Heart right ventricle (tissue), 16 donors: ENCODE measurements at regions of chr5 and their contacts with region 1.

Region 1: GRCh38 chr5:154610321-154611154 is 132.5 kb upstream of the HAND1 start:
- DNase-seq: peak; percentile 56 to 66
- ATAC-seq: peak; percentile 86 to 93 (median 92)
- H3K4me3 ChIP-seq: peak overlapping the region in 9 of 10 donors; percentile 10 to 48 (median 36)
- H3K27ac ChIP-seq: no peak overlapping the region
- H3K4me1 ChIP-seq: peaks cover 5 to 18% (median 13%) of the 10 kb centered on the region in 9 donors
- H3K27me3 ChIP-seq: peaks cover 5 to 78% (median 62%) of the 10 kb centered on the region in 7 donors
- CTCF ChIP-seq: peak; percentile 59 to 86 (median 82)

Region 2: DNA sequence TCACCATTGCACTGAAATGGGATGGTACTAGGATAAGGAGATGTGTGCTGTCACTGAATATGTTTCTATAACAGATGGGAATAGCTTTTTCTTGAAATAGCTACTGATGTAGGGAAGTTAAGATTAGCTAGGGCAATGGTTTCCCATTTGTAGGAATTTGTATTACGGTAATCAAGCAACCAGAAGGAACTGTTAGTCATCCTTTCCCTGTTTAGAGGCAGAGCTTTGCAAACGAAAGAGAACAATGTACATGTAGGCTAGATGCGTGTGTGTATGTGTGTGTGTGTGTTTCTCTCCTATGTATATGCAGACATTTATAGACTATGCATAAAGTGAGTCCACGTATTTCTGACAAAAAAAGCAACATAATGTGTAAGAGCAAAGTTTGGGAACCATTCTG is 1292.0 kb before region 1 on chr5:
- intact Hi-C with region 1: loop called in 1 of 10 experiments (anchors 5 kb)
- DNase-seq: no peak
- ATAC-seq: no peak
- H3K4me3 ChIP-seq: no peak overlapping the region
- H3K27ac ChIP-seq: no peak overlapping the region
- H3K4me1 ChIP-seq: no peaks in the 10 kb centered on the region
- H3K27me3 ChIP-seq: peaks cover 0 to 5% (median 0%) of the 10 kb centered on the region in 7 donors
- CTCF ChIP-seq: no peak

Region 3: GRCh38 chr5:154467655-154468354 is 142.7 kb before region 1 on chr5:
- intact Hi-C with region 1: loop called (anchors 1 to 5 kb)
- DNase-seq: peak; percentile 76 to 79
- ATAC-seq: peak; percentile 87 to 95 (median 92)
- H3K4me3 ChIP-seq: no peak overlapping the region
- H3K27ac ChIP-seq: no peak overlapping the region
- H3K4me1 ChIP-seq: peaks cover 0 to 19% (median 3%) of the 10 kb centered on the region in 9 donors
- H3K27me3 ChIP-seq: peaks cover under 1 to 55% (median 35%) of the 10 kb centered on the region in 7 donors
- CTCF ChIP-seq: peak; percentile 89 to 97 (median 94)

Region 4: GRCh38 chr5:154520861-154521453 is 89.6 kb before region 1 on chr5:
- intact Hi-C with region 1: loop called in 3 of 10 experiments (anchors 2 to 10 kb)
- DNase-seq: no peak
- ATAC-seq: peak in 1 of 8 donors; percentile 24
- H3K4me3 ChIP-seq: no peak overlapping the region
- H3K27ac ChIP-seq: no peak overlapping the region
- H3K4me1 ChIP-seq: peaks cover 0 to 20% (median 4%) of the 10 kb centered on the region in 9 donors
- H3K27me3 ChIP-seq: peaks cover 0 to 48% (median 44%) of the 10 kb centered on the region in 7 donors
- CTCF ChIP-seq: peak; percentile 29 to 70 (median 60)

Region 5: DNA sequence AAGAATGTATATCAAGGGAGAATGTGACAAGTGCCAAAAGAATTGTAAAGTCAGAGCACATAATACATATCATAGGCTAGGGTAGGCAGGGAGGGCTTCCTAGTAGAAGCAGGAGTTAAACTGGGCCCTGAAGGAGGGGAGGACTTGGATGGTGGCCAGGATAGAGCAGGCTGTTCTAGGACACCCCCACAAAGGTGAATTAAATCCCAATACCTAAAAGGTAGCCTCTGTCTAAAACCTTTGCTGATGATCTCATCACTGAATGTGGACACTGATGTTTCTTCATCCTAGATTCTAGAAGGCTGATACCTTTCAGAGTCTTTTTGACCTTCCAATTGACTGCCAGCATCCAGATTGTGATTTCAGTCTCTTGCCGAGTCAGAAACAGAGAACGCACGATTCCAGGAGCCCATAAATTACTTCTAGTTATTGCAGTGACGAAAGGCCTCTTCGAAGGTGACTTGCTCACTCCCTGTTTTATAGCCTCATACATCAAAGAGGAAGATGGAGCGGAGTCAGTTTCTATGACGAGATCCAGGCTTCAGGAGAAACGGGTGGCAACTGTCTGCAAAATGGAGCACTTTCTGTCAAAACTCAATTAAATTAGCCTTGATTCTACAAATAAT is 446.2 kb after region 1 on chr5:
- intact Hi-C with region 1: no loop called
- DNase-seq: no peak
- ATAC-seq: no peak
- H3K4me3 ChIP-seq: no peak overlapping the region
- H3K27ac ChIP-seq: no peak overlapping the region
- H3K4me1 ChIP-seq: peaks cover 0 to 17% (median 9%) of the 10 kb centered on the region in 9 donors
- H3K27me3 ChIP-seq: no peaks in the 10 kb centered on the region
- CTCF ChIP-seq: no peak